ENCODE measurements at regions of chr3 and their contacts with region 1.

Region 1: DNA sequence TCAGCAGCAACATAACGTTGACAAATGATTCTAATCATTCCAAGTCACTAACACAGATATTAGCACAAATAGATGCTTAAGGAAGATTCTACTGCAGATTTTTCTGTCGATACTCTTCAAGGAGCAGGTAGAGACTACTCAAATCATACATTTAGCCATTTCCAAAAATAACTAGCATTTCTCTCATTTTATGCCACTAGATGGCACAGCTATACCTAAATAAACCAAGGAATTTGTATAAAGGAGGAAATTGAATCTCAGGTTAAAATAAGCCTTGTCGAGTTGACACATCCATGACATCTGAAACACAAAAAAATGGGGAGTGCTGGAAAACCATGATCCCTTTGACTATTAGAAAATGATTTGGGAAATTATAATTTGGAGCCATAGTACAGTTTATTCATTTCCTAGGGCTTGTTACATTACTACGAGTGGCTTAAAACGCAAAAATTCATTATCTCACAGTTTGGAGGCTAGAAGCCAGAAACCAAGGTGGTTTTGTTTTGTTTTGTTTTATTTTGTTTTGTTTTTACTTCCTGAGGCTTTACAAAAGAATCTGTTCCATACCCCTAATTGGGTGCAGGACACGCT is 59.5 kb upstream of the STRIT1 start:
- DNase-seq: peak in 1 of 2 experiments; percentile 34
- H3K4me3 ChIP-seq: no peak overlapping the region
- H3K4me3 Mint-ChIP-seq: no peak overlapping the region
- H3K27ac Mint-ChIP-seq: no peak overlapping the region
- H3K4me1 ChIP-seq: no peaks in the 10 kb centered on the region
- H3K4me1 Mint-ChIP-seq: no peaks in the 10 kb centered on the region
- H3K27me3 ChIP-seq: no peaks in the 10 kb centered on the region
- H3K27me3 Mint-ChIP-seq: peaks cover 3% of the 10 kb centered on the region
- CTCF ChIP-seq: peak; percentile 46 to 56

Region 2: DNA sequence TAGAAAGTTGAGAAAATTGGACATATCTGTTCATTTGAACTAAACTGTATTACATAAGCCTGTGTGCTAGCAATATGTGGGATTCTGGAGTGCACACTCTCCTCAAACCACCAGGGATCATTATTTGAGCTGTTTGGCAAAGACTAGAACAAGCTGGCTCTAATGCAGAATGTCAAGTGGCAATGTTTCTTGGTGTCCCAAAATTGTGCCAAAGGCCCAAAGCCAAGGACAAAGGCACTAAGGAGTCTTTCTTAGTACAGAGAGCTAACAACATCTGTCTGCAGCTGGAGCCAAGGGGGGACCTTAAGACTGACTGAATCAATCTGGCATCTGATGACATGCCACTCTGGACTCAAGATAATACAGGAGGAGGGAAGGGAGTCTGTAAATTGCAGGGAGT is 17.2 kb after region 1 on chr3:
- CTCF ChIA-PET with region 1: no interaction called
- POLR2A ChIA-PET with region 1: no interaction called
- intact Hi-C with region 1: no loop called
- DNase-seq: no peak
- H3K4me3 ChIP-seq: no peak overlapping the region
- H3K4me3 Mint-ChIP-seq: no peak overlapping the region
- H3K27ac Mint-ChIP-seq: no peak overlapping the region
- H3K4me1 ChIP-seq: no peaks in the 10 kb centered on the region
- H3K4me1 Mint-ChIP-seq: no peaks in the 10 kb centered on the region
- H3K27me3 ChIP-seq: no peaks in the 10 kb centered on the region
- H3K27me3 Mint-ChIP-seq: no peaks in the 10 kb centered on the region
- CTCF ChIP-seq: no peak

Region 3: DNA sequence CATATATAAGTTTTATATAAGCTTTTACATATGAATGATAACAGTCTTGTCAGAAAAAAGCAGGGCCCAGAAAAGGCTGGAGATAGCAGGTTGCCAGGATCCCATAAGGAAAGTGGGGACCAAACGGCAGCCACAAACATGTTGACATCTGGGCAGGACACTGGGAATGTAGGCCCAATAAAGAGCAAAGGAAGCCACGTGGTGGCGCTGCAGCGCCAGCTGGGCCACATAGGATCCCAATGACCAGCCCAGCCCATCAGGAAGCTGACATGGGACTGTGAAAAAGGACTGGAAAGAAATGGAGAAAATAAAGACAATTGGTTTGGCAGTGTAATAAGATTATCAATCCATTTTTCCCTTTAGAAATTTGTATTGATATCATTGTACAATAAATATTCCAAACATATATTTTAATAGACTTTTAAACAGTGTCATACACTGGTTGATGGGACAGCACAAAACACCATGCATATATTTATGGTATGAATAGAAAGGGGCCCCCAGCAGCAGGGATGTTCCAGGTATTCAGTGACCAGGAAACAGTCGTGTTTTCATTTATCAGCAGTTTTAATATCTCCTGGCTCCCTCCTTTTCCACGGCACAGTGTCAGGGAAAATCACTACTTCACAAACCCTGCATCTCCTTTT is 29.5 kb after region 1 on chr3:
- CTCF ChIA-PET with region 1: interaction called, 3 read pairs
- POLR2A ChIA-PET with region 1: no interaction called
- intact Hi-C with region 1: loop called (anchors 1 kb)
- DNase-seq: peak; percentile 69 to 76
- H3K4me3 ChIP-seq: no peak overlapping the region
- H3K4me3 Mint-ChIP-seq: no peak overlapping the region
- H3K27ac Mint-ChIP-seq: no peak overlapping the region
- H3K4me1 ChIP-seq: no peaks in the 10 kb centered on the region
- H3K4me1 Mint-ChIP-seq: peaks cover 11% of the 10 kb centered on the region
- H3K27me3 ChIP-seq: no peaks in the 10 kb centered on the region
- H3K27me3 Mint-ChIP-seq: peaks cover 4% of the 10 kb centered on the region
- CTCF ChIP-seq: peak; percentile 72 to 90

Region 4: DNA sequence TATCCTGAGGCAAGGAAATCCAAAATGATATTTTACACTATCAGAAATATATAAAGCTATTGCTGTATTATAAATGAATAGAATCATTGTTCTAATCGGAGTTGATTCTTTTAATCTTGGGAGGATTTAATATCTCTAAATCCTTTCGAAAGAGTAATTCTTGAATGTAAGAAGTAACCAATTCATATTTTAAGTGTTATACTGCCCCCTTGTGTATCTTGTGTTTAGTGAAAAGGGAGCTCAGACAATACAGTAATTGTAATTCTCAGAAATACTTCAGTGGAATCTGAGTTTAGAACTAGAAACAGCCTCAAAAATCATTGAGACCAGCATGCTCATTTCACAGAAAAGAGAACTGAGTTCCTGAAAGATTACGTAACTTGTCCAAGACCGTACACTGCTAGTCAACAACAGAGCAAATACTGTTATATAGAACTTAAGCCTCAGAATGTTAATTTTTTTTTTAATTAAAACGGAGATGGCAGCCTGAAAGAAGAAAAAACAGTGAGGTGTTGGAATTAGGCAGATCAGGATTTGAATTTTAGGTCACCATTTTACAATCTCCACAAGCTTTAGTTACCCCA is 349.0 kb after region 1 on chr3:
- CTCF ChIA-PET with region 1: interaction called, 14 read pairs
- POLR2A ChIA-PET with region 1: no interaction called
- intact Hi-C with region 1: loop called (anchors 1 kb)
- DNase-seq: peak in 1 of 2 experiments; percentile 50
- H3K4me3 ChIP-seq: no peak overlapping the region
- H3K4me3 Mint-ChIP-seq: no peak overlapping the region
- H3K27ac Mint-ChIP-seq: no peak overlapping the region
- H3K4me1 ChIP-seq: no peaks in the 10 kb centered on the region
- H3K4me1 Mint-ChIP-seq: no peaks in the 10 kb centered on the region
- H3K27me3 ChIP-seq: no peaks in the 10 kb centered on the region
- H3K27me3 Mint-ChIP-seq: no peaks in the 10 kb centered on the region
- CTCF ChIP-seq: peak; percentile 31 to 47

Region 5: DNA sequence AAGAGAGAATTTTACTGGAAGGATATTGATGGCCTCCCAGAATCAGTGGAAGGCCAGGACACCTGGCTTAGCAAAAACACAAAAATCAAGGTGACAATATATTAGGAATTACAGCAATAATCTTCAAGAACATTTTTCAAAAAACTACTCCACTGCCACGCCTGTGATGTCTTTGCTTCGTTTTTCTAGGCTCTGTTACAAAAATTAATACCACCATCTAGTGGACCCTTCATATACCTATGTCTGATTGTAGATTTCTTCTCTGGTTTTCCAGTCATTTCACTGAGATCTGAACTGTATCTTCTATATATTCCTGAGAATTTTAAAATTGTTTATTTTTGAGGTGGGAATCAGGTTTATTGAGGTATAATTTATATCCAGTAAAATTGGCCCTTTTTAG is 506.9 kb after region 1 on chr3:
- CTCF ChIA-PET with region 1: no interaction called
- POLR2A ChIA-PET with region 1: no interaction called
- intact Hi-C with region 1: loop called (anchors 10 kb)
- DNase-seq: no peak
- H3K4me3 ChIP-seq: no peak overlapping the region
- H3K4me3 Mint-ChIP-seq: no peak overlapping the region
- H3K27ac Mint-ChIP-seq: no peak overlapping the region
- H3K4me1 ChIP-seq: no peaks in the 10 kb centered on the region
- H3K4me1 Mint-ChIP-seq: no peaks in the 10 kb centered on the region
- H3K27me3 ChIP-seq: no peaks in the 10 kb centered on the region
- H3K27me3 Mint-ChIP-seq: no peaks in the 10 kb centered on the region
- CTCF ChIP-seq: peak in 1 of 2 experiments; percentile 18